HepG2 (cell line): ENCODE measurements at regions of chr4 and their contacts with region 1.

Region 1: GRCh38 chr4:4880492-4880891 is 21.0 kb downstream of the MSX1 start:
- DNase-seq: no peak
- ATAC-seq: no peak
- H3K4me3 ChIP-seq: no peak overlapping the region
- H3K27ac ChIP-seq: no peak overlapping the region
- H3K4me1 ChIP-seq: peaks cover 7% of the 10 kb centered on the region
- H3K27me3 ChIP-seq: peaks cover 0 to 1% of the 10 kb centered on the region in 2 experiments; a peak in 1 of 5 replicates
- CTCF ChIP-seq: peak; percentile 44
- EP300 ChIP-seq: no peak
- POLR2A ChIP-seq: no peak
- RAD21 ChIP-seq: no peak

Region 2: DNA sequence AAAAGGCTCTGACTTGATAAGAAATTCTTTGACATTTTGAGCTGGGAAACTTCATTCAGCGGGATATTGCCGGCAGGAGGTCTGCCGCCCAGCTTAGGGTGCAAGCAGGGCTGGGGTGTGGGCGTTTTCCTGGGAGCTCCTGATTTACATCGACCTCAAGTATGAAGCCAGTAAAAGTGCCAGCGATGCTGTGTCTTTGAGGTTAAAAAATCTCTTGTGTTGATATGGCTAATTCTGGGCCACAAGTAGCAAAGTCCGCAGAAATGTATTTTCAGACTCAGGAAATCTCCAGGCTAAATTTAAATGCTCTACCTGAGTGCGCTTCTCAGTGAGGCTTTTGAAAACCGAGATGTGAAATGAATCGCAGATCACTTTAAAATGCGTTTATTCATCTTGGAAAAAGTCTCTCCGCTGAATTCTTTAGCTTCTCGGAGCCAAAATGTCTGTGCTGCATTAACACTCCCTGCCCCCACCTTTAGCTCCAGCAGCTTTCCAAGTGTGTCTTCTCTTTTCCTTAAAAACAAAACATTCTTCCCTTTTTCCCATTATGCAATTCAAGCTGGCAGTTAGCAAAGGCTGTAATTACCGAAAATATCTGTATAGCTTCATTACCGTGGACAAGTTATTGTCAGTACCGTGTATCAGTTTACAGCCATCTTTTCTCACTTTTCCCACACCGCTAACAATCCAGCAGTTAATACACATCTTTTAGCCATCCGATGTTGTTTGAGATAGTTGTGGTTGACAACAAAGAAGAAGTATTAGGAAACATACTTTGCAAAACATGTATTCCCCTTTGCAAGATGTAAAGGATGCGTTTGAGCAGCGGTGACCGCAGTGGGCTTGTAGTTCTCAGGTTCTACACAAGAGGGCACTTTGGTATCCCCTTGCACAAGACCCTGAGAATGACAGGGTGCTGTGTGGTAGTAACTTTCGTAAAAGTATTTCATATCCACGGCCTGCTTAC is 202.7 kb before region 1 on chr4:
- CTCF ChIA-PET with region 1: interaction called, 9 read pairs
- POLR2A ChIA-PET with region 1: no interaction called
- in situ Hi-C with region 1: no loop called
- intact Hi-C with region 1: loop called (anchors 1 kb)
- DNase-seq: no peak
- ATAC-seq: peak; percentile 54
- H3K4me3 ChIP-seq: no peak overlapping the region
- H3K27ac ChIP-seq: no peak overlapping the region
- H3K4me1 ChIP-seq: peaks cover 47% of the 10 kb centered on the region
- H3K27me3 ChIP-seq: no peaks in the 10 kb centered on the region; a peak in 1 of 5 replicates
- CTCF ChIP-seq: peak; percentile 77
- EP300 ChIP-seq: no peak
- POLR2A ChIP-seq: no peak
- RAD21 ChIP-seq: peak; percentile 70

Region 3: GRCh38 chr4:4919927-4920326 is 39.4 kb after region 1 on chr4:
- CTCF ChIA-PET with region 1: no interaction called
- POLR2A ChIA-PET with region 1: no interaction called
- in situ Hi-C with region 1: no loop called
- intact Hi-C with region 1: no loop called
- DNase-seq: no peak
- ATAC-seq: no peak
- H3K4me3 ChIP-seq: no peak overlapping the region
- H3K27ac ChIP-seq: no peak overlapping the region
- H3K4me1 ChIP-seq: no peaks in the 10 kb centered on the region
- H3K27me3 ChIP-seq: peaks cover 0 to 7% of the 10 kb centered on the region in 2 experiments; a peak in 1 of 5 replicates
- CTCF ChIP-seq: no peak
- EP300 ChIP-seq: no peak
- POLR2A ChIP-seq: no peak
- RAD21 ChIP-seq: no peak

Region 4: GRCh38 chr4:5050520-5051277 is 170.2 kb after region 1 on chr4:
- CTCF ChIA-PET with region 1: no interaction called
- POLR2A ChIA-PET with region 1: no interaction called
- in situ Hi-C with region 1: no loop called
- intact Hi-C with region 1: no loop called
- DNase-seq: peak; percentile 46
- ATAC-seq: peak; percentile 96
- H3K4me3 ChIP-seq: no peak overlapping the region
- H3K27ac ChIP-seq: no peak overlapping the region
- H3K4me1 ChIP-seq: peaks cover 11% of the 10 kb centered on the region
- H3K27me3 ChIP-seq: peaks cover 2 to 5% of the 10 kb centered on the region in 2 experiments; a peak in 1 of 5 replicates
- CTCF ChIP-seq: peak; percentile 86
- EP300 ChIP-seq: no peak
- POLR2A ChIP-seq: no peak
- RAD21 ChIP-seq: peak; percentile 82

Region 5: DNA sequence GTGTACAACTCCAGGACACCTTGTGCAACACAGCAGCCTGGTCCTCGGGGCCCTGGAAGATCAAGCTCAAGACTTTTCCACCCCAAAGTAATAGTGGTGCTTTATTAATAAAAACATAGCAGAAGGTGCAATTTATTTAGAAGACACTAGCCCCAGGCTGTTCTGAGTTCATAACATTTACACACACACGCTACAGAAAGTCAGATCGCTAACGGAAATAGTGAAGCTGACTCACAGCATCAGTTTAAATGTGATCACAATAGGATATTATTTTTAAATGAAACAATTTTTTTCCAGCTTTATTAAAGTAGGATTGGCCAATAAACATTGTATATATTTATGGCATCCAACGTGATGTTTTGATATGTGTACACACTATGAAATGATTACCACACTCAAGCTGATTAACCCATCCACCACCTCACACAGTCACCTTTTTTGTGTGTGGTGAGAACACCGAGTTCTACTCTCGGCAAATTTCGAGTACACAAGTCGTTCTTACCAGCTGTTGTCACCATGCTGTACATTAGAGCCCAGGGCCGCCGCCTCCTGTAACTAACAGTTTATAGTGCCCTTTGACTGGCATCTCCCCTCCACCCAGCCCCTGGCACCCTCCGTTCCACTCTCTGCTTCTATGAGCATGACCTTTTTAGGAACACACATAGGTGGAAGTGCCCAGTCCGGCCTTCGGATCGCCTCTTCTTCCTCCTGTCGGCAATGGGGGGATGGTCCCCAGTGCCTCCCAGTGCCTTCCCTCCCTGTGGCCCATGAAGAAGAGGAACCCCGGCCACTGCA is 312.0 kb after region 1 on chr4:
- CTCF ChIA-PET with region 1: no interaction called
- POLR2A ChIA-PET with region 1: no interaction called
- in situ Hi-C with region 1: no loop called
- intact Hi-C with region 1: no loop called
- DNase-seq: no peak
- ATAC-seq: no peak
- H3K4me3 ChIP-seq: no peak overlapping the region
- H3K27ac ChIP-seq: no peak overlapping the region
- H3K4me1 ChIP-seq: no peaks in the 10 kb centered on the region
- H3K27me3 ChIP-seq: peaks cover 4 to 38% of the 10 kb centered on the region in 2 experiments; a peak in 4 of 5 replicates
- CTCF ChIP-seq: no peak
- EP300 ChIP-seq: no peak
- POLR2A ChIP-seq: no peak
- RAD21 ChIP-seq: no peak